Endothelial cell of umbilical vein (primary cell): ENCODE measurements at regions of chr2 and their contacts with region 1.

Region 1: GRCh38 chr2:32010670-32011484 is at the start of gene MEMO1:
- DNase-seq: peak; percentile 96
- H3K4me3 ChIP-seq: peak within 1 kb of the TSS; percentile 44 to 81 (median 73)
- H3K27ac ChIP-seq: peak within 1 kb of the TSS; percentile 80
- H3K4me1 ChIP-seq: peaks cover 20% of the 10 kb centered on the region
- H3K27me3 ChIP-seq: no peaks in the 10 kb centered on the region
- CTCF ChIP-seq: no peak
- POLR2A ChIP-seq: peak; percentile 90
- total RNA-seq, gene MEMO1: 53.9 and 56.2 TPM in 2 replicates

Region 2: DNA sequence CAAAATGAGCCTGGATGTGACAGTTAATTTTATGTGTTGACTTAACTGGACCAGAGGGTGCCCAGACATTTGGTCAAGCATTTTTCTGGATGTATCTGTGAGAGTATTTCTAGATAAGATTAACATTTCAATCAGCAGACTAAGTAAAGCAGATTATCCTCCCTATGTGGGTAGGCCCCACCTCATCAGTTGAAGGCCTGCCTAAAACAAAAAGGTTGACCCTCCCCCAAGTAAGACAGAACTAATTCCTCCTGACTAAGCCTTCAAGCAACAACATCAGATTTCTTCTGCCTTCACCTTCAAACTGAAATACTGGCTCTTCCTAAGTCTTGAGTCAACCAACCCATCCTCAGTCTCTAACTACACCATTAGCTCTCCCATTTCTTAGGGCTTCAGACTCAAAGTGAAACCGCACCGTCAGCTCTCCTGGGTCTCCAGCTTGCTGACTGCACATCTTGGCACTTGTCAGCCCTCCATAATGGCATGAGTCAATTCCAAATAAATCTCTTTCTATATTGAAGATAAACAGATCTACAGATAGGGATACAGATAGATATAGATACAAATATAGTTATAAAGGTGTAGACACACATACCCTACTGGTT is 48.0 kb before region 1 on chr2:
- CTCF ChIA-PET with region 1: no interaction called
- POLR2A ChIA-PET with region 1: no interaction called
- dilution Hi-C with region 1: no loop called
- intact Hi-C with region 1: no loop called
- DNase-seq: no peak
- H3K4me3 ChIP-seq: no peak overlapping the region
- H3K27ac ChIP-seq: no peak overlapping the region
- H3K4me1 ChIP-seq: no peaks in the 10 kb centered on the region
- H3K27me3 ChIP-seq: no peaks in the 10 kb centered on the region
- CTCF ChIP-seq: no peak
- POLR2A ChIP-seq: no peak

Region 3: GRCh38 chr2:32135409-32135808 is 124.5 kb after region 1 on chr2:
- CTCF ChIA-PET with region 1: interaction called, 3 read pairs
- POLR2A ChIA-PET with region 1: no interaction called
- dilution Hi-C with region 1: no loop called
- intact Hi-C with region 1: loop called (anchors 5 kb)
- DNase-seq: peak; percentile 69
- H3K4me3 ChIP-seq: no peak overlapping the region
- H3K27ac ChIP-seq: no peak overlapping the region
- H3K4me1 ChIP-seq: no peaks in the 10 kb centered on the region
- H3K27me3 ChIP-seq: no peaks in the 10 kb centered on the region
- CTCF ChIP-seq: peak in 1 of 2 donors; percentile 10
- POLR2A ChIP-seq: no peak

Region 4: GRCh38 chr2:32212295-32212694 is 201.4 kb after region 1 on chr2:
- CTCF ChIA-PET with region 1: no interaction called
- POLR2A ChIA-PET with region 1: no interaction called
- dilution Hi-C with region 1: no loop called
- intact Hi-C with region 1: no loop called
- DNase-seq: no peak
- H3K4me3 ChIP-seq: no peak overlapping the region
- H3K27ac ChIP-seq: no peak overlapping the region
- H3K4me1 ChIP-seq: no peaks in the 10 kb centered on the region
- H3K27me3 ChIP-seq: no peaks in the 10 kb centered on the region
- CTCF ChIP-seq: no peak
- POLR2A ChIP-seq: no peak